MCF 10A (cell line): ENCODE measurements at regions of chr1 and their contacts with region 1.

Region 1: GRCh38 chr1:51296383-51297357 is 33.7 kb downstream of the TTC39A start:
- DNase-seq: peak; percentile 83
- H3K4me3 Mint-ChIP-seq: peak overlapping the region; percentile 41
- H3K27ac Mint-ChIP-seq: no peak overlapping the region
- H3K4me1 Mint-ChIP-seq: peaks cover 13% of the 10 kb centered on the region
- H3K27me3 Mint-ChIP-seq: no peaks in the 10 kb centered on the region
- CTCF ChIP-seq: peak; percentile 98

Region 2: GRCh38 chr1:51253691-51254090 is 43.0 kb before region 1 on chr1:
- CTCF ChIA-PET with region 1: interaction called, 19 read pairs
- POLR2A ChIA-PET with region 1: interaction called, 3 read pairs
- intact Hi-C with region 1: no loop called
- DNase-seq: peak; percentile 43
- H3K4me3 Mint-ChIP-seq: no peak overlapping the region
- H3K27ac Mint-ChIP-seq: no peak overlapping the region
- H3K4me1 Mint-ChIP-seq: peaks cover 24% of the 10 kb centered on the region
- H3K27me3 Mint-ChIP-seq: no peaks in the 10 kb centered on the region
- CTCF ChIP-seq: no peak

Region 3: GRCh38 chr1:51285055-51285454 is 11.6 kb before region 1 on chr1:
- CTCF ChIA-PET with region 1: interaction called, 22 read pairs
- POLR2A ChIA-PET with region 1: interaction called, 3 read pairs
- intact Hi-C with region 1: no loop called
- DNase-seq: no peak
- H3K4me3 Mint-ChIP-seq: no peak overlapping the region
- H3K27ac Mint-ChIP-seq: no peak overlapping the region
- H3K4me1 Mint-ChIP-seq: peaks cover 7% of the 10 kb centered on the region
- H3K27me3 Mint-ChIP-seq: no peaks in the 10 kb centered on the region
- CTCF ChIP-seq: no peak

Region 4: GRCh38 chr1:51313961-51314777 is 17.5 kb after region 1 on chr1:
- CTCF ChIA-PET with region 1: interaction called, 22 read pairs
- POLR2A ChIA-PET with region 1: no interaction called
- intact Hi-C with region 1: no loop called
- DNase-seq: peak; percentile 77
- H3K4me3 Mint-ChIP-seq: no peak overlapping the region
- H3K27ac Mint-ChIP-seq: peak overlapping the region; percentile 85
- H3K4me1 Mint-ChIP-seq: peaks cover 17% of the 10 kb centered on the region
- H3K27me3 Mint-ChIP-seq: no peaks in the 10 kb centered on the region
- CTCF ChIP-seq: no peak